ENCODE measurements at regions of chr5 and their contacts with region 1.

Region 1: DNA sequence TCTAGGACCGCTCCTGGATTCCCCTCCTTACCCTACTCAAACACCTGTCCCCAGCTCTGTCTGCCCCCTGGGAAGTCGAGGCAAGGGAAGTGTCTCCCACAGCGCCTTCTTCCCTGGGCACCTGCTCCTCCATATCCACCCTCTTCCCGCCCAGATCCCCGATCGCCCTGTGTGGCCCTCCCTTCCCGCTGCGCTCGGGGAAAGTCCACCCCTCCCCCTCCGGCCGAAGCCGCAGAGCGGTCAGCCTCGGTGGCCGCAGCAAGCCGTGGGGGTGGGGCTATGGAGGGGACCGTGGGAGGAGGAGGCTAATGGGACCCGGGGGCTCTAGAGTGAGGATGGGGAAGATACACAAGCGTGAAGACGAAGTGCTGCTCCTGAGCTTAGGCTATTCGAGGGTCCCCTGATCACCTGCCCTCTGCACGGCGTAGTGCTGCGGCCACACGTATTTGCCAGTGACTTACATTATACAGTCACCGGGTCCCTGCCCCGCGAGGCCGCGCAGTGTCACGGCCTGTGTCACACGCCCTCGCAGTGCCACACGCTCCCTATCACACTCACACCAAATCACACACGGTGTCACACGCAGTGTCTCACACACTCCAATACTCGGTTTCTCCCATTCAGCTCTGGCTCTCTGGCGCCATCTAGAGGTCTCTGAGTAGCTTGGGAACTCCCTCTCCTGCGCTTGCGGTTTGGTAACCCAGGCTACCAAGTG is 658 bp upstream of the PCDH1 start:
- DNase-seq: peak; percentile 90
- ATAC-seq: peak; percentile 30
- H3K4me3 Mint-ChIP-seq: peak overlapping the region; percentile 84
- H3K27ac Mint-ChIP-seq: peak overlapping the region; percentile 98
- H3K4me1 Mint-ChIP-seq: peaks cover 65% of the 10 kb centered on the region
- H3K27me3 Mint-ChIP-seq: peaks cover 6% of the 10 kb centered on the region; the same call in 1 of the 2 replicates
- CTCF ChIP-seq: peak; percentile 93

Region 2: GRCh38 chr5:141691867-141692532 is 186.9 kb before region 1 on chr5:
- CTCF ChIA-PET with region 1: interaction called, 80 read pairs
- POLR2A ChIA-PET with region 1: interaction called, 3 read pairs
- DNase-seq: peak; percentile 93
- ATAC-seq: peak; percentile 72
- H3K4me3 Mint-ChIP-seq: peak overlapping the region; percentile 69
- H3K27ac Mint-ChIP-seq: no peak overlapping the region
- H3K4me1 Mint-ChIP-seq: peaks cover 30% of the 10 kb centered on the region
- H3K27me3 Mint-ChIP-seq: peaks cover 10% of the 10 kb centered on the region
- CTCF ChIP-seq: peak; percentile 99

Region 3: GRCh38 chr5:141778206-141778605 is 100.7 kb before region 1 on chr5:
- CTCF ChIA-PET with region 1: interaction called, 28 read pairs
- POLR2A ChIA-PET with region 1: interaction called, 4 read pairs
- DNase-seq: no peak
- ATAC-seq: peak; percentile 45
- H3K4me3 Mint-ChIP-seq: no peak overlapping the region
- H3K27ac Mint-ChIP-seq: no peak overlapping the region
- H3K4me1 Mint-ChIP-seq: peaks cover 38% of the 10 kb centered on the region
- H3K27me3 Mint-ChIP-seq: no peaks in the 10 kb centered on the region
- CTCF ChIP-seq: no peak

Region 4: GRCh38 chr5:141835928-141836670 is 42.8 kb before region 1 on chr5:
- CTCF ChIA-PET with region 1: interaction called, 83 read pairs
- POLR2A ChIA-PET with region 1: interaction called, 22 read pairs
- DNase-seq: no peak
- ATAC-seq: peak; percentile 5; the same call in 1 of the 2 replicates
- H3K4me3 Mint-ChIP-seq: peak overlapping the region; percentile 29; the same call in 1 of the 2 replicates
- H3K27ac Mint-ChIP-seq: peak overlapping the region; percentile 96
- H3K4me1 Mint-ChIP-seq: peaks cover 76% of the 10 kb centered on the region
- H3K27me3 Mint-ChIP-seq: peaks cover 8% of the 10 kb centered on the region
- CTCF ChIP-seq: no peak

Region 5: GRCh38 chr5:141889282-141889871 is 10.5 kb after region 1 on chr5:
- CTCF ChIA-PET with region 1: interaction called, 14 read pairs
- POLR2A ChIA-PET with region 1: no interaction called
- DNase-seq: no peak
- ATAC-seq: no peak
- H3K4me3 Mint-ChIP-seq: no peak overlapping the region
- H3K27ac Mint-ChIP-seq: peak overlapping the region; percentile 19; the same call in 1 of the 2 replicates
- H3K4me1 Mint-ChIP-seq: peaks cover 5% of the 10 kb centered on the region; the same call in 1 of the 2 replicates
- H3K27me3 Mint-ChIP-seq: no peaks in the 10 kb centered on the region
- CTCF ChIP-seq: no peak

Region 6: DNA sequence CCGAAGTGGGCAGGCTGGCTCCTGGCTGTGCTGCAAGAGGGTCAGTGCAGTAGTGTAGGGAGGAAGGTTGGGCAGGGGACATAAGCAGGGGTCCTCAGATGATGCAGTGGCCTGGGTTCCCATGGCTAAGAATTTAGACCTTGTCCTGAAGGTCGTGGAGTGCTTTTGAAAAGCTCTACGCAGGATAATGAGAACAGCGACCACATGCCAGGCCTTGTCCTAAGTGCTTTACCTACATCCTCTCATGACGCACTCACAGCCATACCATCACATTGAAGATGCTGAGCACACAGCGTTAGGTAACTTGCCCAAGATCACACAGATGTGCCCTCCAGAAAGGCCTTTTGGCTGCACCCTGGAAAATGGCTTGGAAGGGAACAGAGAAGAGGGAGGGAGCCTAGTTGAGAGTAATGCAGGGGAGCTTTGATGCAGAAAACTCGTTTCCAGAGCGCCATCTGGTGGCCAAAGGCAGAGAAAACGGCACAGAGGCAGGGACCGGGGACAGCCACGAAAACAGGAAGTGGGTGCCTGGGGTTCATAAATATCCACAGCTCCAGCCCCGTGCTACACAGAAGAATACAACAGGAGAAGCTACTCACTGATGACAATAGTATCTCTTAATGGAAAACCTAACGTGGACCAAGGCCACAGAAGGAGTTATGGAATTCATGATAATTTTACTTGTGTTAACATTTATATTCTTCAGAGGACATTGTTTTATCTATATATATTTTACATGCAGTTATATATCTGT is 81.8 kb after region 1 on chr5:
- CTCF ChIA-PET with region 1: interaction called, 98 read pairs
- POLR2A ChIA-PET with region 1: interaction called, 3 read pairs
- DNase-seq: peak; percentile 88
- ATAC-seq: peak; percentile 90
- H3K4me3 Mint-ChIP-seq: no peak overlapping the region
- H3K27ac Mint-ChIP-seq: 0 out of 2 replicates have a peak overlapping the region, but pooled peaks have one; percentile 24
- H3K4me1 Mint-ChIP-seq: peaks cover 38% of the 10 kb centered on the region
- H3K27me3 Mint-ChIP-seq: no peaks in the 10 kb centered on the region
- CTCF ChIP-seq: peak; percentile 91